ENCODE measurements at regions of chr6 and their contacts with region 1.

Region 1: DNA sequence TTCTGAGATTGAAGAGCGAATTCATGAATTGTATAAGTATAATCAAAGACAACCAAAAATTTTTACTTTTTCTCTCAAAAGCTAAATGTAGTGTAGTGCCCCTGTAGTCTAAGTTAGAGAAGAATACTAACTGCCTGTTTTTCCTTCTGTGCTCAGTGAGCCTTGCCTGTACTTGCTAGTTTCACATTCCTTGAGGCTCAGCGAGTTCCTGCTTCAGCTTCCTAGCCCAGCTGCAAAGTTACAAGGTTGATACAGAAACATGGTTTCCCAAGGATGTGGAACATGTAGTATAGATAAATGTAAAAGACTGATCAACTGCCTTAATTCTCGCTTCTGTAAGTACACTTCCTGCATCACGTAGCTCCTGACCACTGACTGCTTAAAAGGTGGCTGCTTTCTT is 33.1 kb upstream of the SEC63 start:
- ATAC-seq: no peak
- H3K4me3 ChIP-seq: no peak overlapping the region
- H3K27ac ChIP-seq: no peak overlapping the region
- H3K4me1 ChIP-seq: no peaks in the 10 kb centered on the region

Region 2: DNA sequence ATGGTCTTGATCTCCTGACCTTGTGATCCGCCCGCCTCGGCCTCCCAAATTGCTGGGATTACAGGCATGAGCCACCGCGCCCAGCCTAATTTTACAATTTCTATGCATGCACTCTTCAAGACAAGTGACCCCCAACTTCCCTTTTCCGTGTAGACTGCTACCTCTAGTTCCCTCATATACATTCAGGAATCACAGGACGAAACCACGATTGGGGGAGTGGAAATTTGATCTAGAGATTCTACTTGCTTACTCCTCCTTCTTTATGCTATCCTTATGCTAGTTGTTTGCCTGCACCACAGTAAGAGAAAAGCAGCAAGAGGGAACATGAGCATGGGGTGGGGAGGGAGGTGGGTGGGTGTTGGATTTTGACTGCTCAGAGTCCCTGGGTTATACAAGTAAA is 48.6 kb after region 1 on chr6:
- in situ Hi-C with region 1: loop called in 1 of 9 experiments (anchors 10 kb)
- ATAC-seq: no peak
- H3K4me3 ChIP-seq: no peak overlapping the region
- H3K27ac ChIP-seq: no peak overlapping the region
- H3K4me1 ChIP-seq: no peaks in the 10 kb centered on the region

Measured in motor neuron (in vitro differentiated cells).